PC-3 (cell line): ENCODE measurements at regions of chr17 and their contacts with region 1.

Region 1: DNA sequence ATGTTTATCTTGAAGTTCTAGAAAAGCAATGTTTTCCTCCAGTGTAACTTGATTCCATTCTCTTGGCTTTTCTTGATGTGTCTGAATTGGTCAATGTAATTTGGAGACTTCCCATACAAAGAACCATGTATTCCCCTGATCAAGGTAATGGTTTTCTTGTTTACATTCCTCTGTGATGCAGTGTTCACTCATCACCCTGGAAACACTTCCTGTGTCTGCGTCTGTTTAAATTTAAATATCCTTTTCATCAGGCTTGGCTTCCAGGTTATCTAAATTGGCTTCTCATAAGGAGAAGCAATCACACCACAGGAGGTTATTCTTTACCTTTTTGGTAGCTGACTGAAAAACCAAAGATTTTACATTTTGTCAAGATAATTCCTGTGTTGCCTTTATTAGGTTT is 237.3 kb upstream of the WSCD1 start:
- DNase-seq: peak; percentile 83
- ATAC-seq: peak; percentile 72
- H3K4me3 ChIP-seq: no peak overlapping the region
- H3K27ac ChIP-seq: peak overlapping the region; percentile 98
- H3K4me1 ChIP-seq: peaks cover 79% of the 10 kb centered on the region
- H3K27me3 ChIP-seq: no peaks in the 10 kb centered on the region
- CTCF ChIP-seq: no peak

Region 2: GRCh38 chr17:5592382-5592781 is 240.5 kb before region 1 on chr17:
- CTCF ChIA-PET with region 1: no interaction called
- POLR2A ChIA-PET with region 1: no interaction called
- intact Hi-C with region 1: loop called (anchors 5 kb)
- DNase-seq: peak; percentile 79
- ATAC-seq: 0 out of 2 replicates have a peak, but pooled peaks have one; percentile 35
- H3K4me3 ChIP-seq: no peak overlapping the region
- H3K27ac ChIP-seq: no peak overlapping the region
- H3K4me1 ChIP-seq: 0 out of 2 replicates have a peak, but pooled peaks cover under 1% of the 10 kb centered on the region
- H3K27me3 ChIP-seq: no peaks in the 10 kb centered on the region
- CTCF ChIP-seq: peak; percentile 70

Region 3: GRCh38 chr17:5715478-5715877 is 117.4 kb before region 1 on chr17:
- CTCF ChIA-PET with region 1: interaction called, 3 read pairs
- POLR2A ChIA-PET with region 1: no interaction called
- intact Hi-C with region 1: loop called (anchors 5 kb)
- DNase-seq: no peak
- ATAC-seq: no peak
- H3K4me3 ChIP-seq: no peak overlapping the region
- H3K27ac ChIP-seq: no peak overlapping the region
- H3K4me1 ChIP-seq: peaks cover 21% of the 10 kb centered on the region
- H3K27me3 ChIP-seq: no peaks in the 10 kb centered on the region
- CTCF ChIP-seq: no peak

Region 4: DNA sequence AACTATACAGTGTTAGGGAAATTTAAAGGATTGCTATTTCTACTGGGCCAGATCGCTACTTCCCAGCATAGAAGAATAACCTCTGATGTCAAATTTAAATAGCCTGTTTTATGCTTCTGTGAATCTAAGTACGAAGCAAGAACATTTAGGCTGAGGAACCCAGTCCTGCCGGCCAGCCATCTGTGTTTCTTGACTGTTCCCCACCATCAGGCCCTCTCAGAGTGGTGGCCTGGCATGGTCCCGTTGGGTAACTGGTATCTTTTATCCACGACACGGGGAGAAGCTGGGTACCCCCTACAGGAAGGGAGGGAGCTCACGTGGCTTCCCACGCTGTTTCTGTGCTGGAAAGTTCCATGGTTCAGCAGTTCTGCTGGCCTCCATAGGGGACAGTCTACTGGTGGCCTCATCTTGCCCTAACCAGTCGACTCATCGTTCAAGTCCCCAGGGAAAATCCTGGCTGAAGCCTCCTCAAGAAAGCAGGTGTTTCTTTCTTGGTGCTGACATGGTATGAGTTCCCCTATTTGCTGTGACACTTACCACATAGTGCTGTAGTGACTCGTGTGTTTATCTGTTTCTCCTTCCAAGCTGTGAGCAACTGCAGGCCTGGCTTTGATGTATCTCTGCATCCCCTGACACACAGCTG is 46.9 kb before region 1 on chr17:
- CTCF ChIA-PET with region 1: no interaction called
- POLR2A ChIA-PET with region 1: no interaction called
- intact Hi-C with region 1: loop called (anchors 2 kb)
- DNase-seq: peak; percentile 60
- ATAC-seq: peak; percentile 4; the same call in 1 of the 2 replicates
- H3K4me3 ChIP-seq: no peak overlapping the region
- H3K27ac ChIP-seq: peak overlapping the region; percentile 99
- H3K4me1 ChIP-seq: peaks cover 51% of the 10 kb centered on the region
- H3K27me3 ChIP-seq: no peaks in the 10 kb centered on the region
- CTCF ChIP-seq: no peak

Region 5: DNA sequence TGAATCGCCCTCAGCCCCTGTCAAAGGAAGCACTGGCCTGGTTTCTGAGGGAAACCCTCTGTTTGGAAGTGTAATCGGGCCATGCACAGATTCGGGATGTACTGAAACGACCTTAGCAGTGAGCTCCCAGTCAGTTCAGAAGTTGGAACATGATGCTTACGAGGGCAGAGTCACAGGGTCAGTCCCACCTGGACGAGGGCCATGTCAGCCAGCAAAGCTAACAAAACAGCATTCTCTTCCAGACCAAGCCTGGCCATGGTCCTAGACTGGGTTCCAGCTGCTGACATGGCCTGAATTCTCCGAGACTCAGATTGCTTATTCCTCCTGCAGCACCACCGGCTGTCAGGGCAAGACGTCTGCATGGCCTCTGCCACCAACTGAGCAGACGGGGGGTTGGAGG is 45.1 kb after region 1 on chr17:
- CTCF ChIA-PET with region 1: no interaction called
- POLR2A ChIA-PET with region 1: no interaction called
- intact Hi-C with region 1: no loop called
- DNase-seq: peak; percentile 34
- ATAC-seq: peak; percentile 40; the same call in 1 of the 2 replicates
- H3K4me3 ChIP-seq: no peak overlapping the region
- H3K27ac ChIP-seq: no peak overlapping the region
- H3K4me1 ChIP-seq: peaks cover 7% of the 10 kb centered on the region; the same call in 1 of the 2 replicates
- H3K27me3 ChIP-seq: no peaks in the 10 kb centered on the region
- CTCF ChIP-seq: no peak

Region 6: DNA sequence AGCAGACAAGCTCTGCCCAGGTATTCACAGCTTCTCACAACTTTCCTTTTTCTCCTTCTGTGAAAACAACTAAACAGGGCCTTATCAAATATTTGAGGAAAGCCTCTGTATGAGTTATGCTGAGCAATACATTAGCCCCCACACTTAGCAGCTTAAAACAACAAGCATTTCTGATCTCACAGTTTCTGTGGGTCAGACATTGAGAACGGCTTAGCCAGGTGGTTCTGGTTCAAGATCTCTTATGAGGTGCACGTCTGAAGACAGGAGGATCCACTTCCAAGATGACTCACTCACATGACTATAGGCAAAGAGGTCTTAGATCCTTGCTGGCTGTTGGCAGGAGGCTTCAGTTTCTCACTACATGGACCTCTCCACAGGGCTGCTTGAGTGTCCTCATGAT is 55.9 kb after region 1 on chr17:
- CTCF ChIA-PET with region 1: interaction called, 3 read pairs
- POLR2A ChIA-PET with region 1: no interaction called
- intact Hi-C with region 1: loop called (anchors 1 kb)
- DNase-seq: peak; percentile 66
- ATAC-seq: no peak
- H3K4me3 ChIP-seq: no peak overlapping the region
- H3K27ac ChIP-seq: peak overlapping the region; percentile 91
- H3K4me1 ChIP-seq: peaks cover 20% of the 10 kb centered on the region
- H3K27me3 ChIP-seq: no peaks in the 10 kb centered on the region
- CTCF ChIP-seq: no peak